Activated naive CD4-positive, alpha-beta T cell treated with anti-CD3 and anti-CD28 coated beads for 36 hours (primary cell): ENCODE measurements at regions of chr7 and their contacts with region 1.

Region 1: GRCh38 chr7:92528188-92528957 is at the starts of genes PEX1 and RBM48:
- DNase-seq: peak; percentile 97
- H3K4me3 Mint-ChIP-seq: peak within 1 kb of the TSS; percentile 84
- H3K27ac Mint-ChIP-seq: peak within 1 kb of the TSS; percentile 91
- H3K4me1 Mint-ChIP-seq: peaks cover 22% of the 10 kb centered on the region
- H3K27me3 Mint-ChIP-seq: no peaks in the 10 kb centered on the region
- total RNA-seq, gene PEX1: 12.9 to 13.2 TPM
- total RNA-seq, gene RBM48: 11.3 to 12.9 TPM

Region 2: DNA sequence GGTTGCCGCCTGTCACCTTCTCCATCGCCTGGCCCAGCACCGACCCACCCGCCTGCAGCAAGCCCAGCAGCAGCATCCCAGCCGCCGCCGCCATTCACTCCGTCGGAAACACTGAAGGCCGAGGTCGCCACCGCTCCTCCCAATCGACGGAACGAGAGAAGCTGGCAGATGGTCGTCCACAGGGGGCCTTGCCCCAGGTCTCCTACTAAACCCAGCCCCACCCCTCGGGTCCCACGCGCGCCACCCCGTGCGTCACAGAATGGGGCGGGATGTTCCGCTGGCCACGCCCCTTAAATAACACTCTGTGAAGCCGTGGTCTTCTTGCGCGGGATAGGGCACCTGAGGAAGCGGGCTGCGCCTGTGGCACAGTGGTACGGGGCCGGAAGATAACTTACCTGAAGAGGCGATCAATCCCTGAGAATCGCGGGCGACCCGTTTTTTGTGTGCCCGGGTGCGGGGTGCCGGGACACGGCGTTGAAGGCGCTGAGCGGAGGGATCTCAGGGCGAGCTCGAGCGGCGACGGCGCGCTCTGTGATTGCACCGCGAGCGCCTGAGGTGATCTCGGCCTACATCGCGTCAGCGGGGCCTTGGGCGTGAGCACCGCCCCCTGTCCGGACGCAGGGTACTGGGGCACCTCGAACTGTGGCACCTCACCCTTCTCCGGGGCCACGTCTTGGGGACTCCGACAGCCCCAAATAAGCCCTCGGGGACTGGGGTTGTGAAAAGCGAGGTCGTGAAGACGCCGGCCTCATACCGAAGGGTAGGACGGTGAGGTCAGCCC is 393.9 kb before region 1 on chr7 and contains the start of gene CYP51A1:
- CTCF ChIA-PET with region 1: no interaction called
- intact Hi-C with region 1: loop called (anchors 1 kb)
- DNase-seq: peak; percentile 93
- H3K4me3 Mint-ChIP-seq: peak within 1 kb of the TSS; percentile 96
- H3K27ac Mint-ChIP-seq: peak within 1 kb of the TSS; percentile 99
- H3K4me1 Mint-ChIP-seq: peaks cover 36% of the 10 kb centered on the region
- H3K27me3 Mint-ChIP-seq: no peaks in the 10 kb centered on the region
- total RNA-seq, gene CYP51A1: 52.8 to 55.5 TPM

Region 3: DNA sequence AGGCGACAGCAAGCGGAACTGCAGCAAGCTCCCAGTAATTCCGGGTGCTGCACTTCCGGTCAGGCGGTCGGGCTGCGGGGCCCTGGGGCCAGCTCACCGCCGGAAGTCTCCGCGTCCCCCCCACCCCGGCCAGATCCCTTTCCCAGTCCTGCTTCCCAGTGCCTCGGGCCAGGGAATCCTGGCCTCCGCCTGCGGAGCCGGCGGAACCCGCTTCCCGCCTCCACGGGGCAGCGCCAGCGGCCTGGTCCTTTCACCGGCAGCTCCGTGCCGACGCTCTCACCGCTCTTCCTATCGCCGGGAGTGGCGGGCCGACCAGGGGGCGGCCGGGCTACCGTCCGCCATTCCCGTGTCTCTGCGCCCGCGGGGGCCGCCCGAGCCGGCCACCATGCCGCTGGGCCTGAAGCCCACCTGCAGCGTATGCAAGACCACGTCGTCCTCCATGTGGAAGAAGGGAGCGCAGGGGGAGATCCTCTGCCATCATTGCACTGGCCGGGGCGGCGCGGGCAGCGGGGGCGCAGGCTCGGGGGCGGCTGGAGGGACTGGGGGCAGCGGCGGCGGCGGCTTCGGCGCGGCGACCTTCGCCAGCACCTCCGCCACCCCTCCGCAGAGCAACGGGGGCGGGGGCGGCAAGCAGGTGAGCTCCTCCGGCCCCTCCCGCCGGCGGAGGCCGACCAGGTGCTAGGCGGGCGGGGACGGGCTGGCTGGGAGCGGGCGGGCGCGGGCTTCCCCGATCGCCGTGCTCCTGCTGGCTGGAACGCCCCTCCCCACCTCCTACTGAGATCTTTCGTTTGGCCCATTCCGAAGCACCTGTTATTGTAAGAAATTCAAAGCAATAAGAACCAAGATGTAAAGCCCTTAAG is 80.8 kb before region 1 on chr7 and contains the start of gene GATAD1:
- CTCF ChIA-PET with region 1: interaction called, 3 read pairs
- intact Hi-C with region 1: loop called (anchors 1 kb)
- DNase-seq: peak; percentile 89
- H3K4me3 Mint-ChIP-seq: peak within 1 kb of the TSS; percentile 82
- H3K27ac Mint-ChIP-seq: peak within 1 kb of the TSS; percentile 84
- H3K4me1 Mint-ChIP-seq: peaks cover 12% of the 10 kb centered on the region
- H3K27me3 Mint-ChIP-seq: no peaks in the 10 kb centered on the region
- total RNA-seq, gene GATAD1: 27.5 to 29.6 TPM

Region 4: GRCh38 chr7:92504563-92504962 is 23.8 kb before region 1 on chr7:
- CTCF ChIA-PET with region 1: no interaction called
- intact Hi-C with region 1: no loop called
- DNase-seq: no peak
- H3K4me3 Mint-ChIP-seq: no peak overlapping the region
- H3K27ac Mint-ChIP-seq: no peak overlapping the region
- H3K4me1 Mint-ChIP-seq: peaks cover 4% of the 10 kb centered on the region
- H3K27me3 Mint-ChIP-seq: no peaks in the 10 kb centered on the region

Region 5: GRCh38 chr7:92682903-92683539 is 154.6 kb after region 1 on chr7:
- CTCF ChIA-PET with region 1: no interaction called
- intact Hi-C with region 1: loop called (anchors 1 kb)
- DNase-seq: peak; percentile 44
- H3K4me3 Mint-ChIP-seq: peak overlapping the region; percentile 7
- H3K27ac Mint-ChIP-seq: peak overlapping the region; percentile 90
- H3K4me1 Mint-ChIP-seq: peaks cover 79% of the 10 kb centered on the region
- H3K27me3 Mint-ChIP-seq: no peaks in the 10 kb centered on the region

Region 6: GRCh38 chr7:92809397-92810241 is 281.2 kb after region 1 on chr7:
- CTCF ChIA-PET with region 1: no interaction called
- intact Hi-C with region 1: loop called (anchors 5 kb)
- DNase-seq: peak; percentile 78
- H3K4me3 Mint-ChIP-seq: no peak overlapping the region
- H3K27ac Mint-ChIP-seq: peak overlapping the region; percentile 54
- H3K4me1 Mint-ChIP-seq: peaks cover 72% of the 10 kb centered on the region
- H3K27me3 Mint-ChIP-seq: no peaks in the 10 kb centered on the region

Region 7: DNA sequence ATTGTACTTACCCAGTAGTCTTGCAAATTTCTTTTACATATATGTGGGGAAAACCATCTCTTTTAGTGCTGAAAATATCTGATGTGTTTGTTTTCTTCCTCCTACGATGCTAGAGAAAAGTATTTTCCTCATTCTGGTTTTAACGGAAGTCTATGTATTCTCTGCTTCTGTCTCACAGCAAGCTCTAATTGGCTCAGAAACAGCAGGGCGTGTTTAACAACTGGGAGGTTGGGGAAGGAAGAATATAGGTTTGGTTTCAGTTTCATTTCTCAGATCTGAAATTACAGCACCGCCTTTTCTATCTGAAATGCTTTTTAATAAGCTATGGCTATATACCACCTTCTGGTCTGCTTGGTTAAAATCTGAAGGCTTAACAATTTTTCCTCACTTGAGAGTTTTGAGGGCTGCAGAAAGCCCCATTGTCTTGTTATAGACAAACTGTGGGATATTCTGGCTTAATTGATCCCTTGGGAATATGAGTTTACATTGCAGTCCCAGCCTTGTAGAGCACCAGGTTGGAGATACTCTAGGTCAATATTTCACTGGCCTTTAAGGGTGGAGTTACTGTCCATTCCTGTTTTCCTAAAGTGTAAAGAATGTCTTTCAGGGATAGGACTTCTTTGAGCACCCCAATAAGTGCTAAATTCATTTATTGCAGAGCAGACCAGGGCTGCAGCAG is 589.6 kb after region 1 on chr7 and contains the start of gene SAMD9:
- CTCF ChIA-PET with region 1: no interaction called
- intact Hi-C with region 1: loop called (anchors 1 kb)
- DNase-seq: peak; percentile 70
- H3K4me3 Mint-ChIP-seq: peak within 1 kb of the TSS; percentile 71
- H3K27ac Mint-ChIP-seq: peak within 1 kb of the TSS; percentile 65
- H3K4me1 Mint-ChIP-seq: peaks cover 47% of the 10 kb centered on the region
- H3K27me3 Mint-ChIP-seq: no peaks in the 10 kb centered on the region
- total RNA-seq, gene SAMD9: 2.9 to 3.1 TPM